ENCODE measurements at regions of chr4 and their contacts with region 1.

Region 1: DNA sequence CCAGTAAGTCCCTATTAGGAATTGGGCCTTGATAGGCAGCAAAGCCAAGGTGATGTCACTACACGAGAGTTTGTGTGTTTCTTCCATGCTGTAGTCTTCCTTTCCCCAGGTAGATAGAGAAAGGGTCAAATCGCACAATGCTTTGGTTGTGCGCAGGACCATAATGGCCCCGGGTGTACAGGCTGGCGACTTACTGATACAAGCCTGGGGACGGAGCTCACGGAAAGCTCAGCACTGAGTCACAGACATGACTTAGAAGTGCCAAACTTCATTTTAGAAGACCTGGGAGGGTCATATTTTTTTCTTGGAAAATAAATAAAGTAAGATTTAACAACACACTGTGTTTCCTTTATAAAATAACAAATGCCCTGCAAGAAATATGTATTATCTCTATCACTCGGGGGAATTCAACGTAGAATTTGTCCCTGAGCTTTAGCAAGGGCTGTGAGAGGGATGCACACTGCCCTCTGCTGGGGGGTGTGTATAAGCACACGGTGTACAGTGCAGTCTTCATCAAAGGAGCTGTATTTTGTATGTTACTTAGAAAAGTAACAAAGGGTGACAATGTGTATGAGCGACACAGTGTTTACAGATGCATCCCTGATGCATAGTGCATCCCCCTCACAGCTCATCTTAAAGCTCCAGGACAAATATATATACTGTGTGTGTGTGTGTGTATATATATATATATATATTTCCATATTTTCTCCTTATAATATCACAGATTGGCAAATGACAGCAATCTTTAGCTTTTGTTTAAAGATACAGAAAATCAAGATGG is 254.5 kb upstream of the VEGFC start:
- DNase-seq: peak; percentile 76
- H3K4me3 ChIP-seq: no peak overlapping the region
- H3K27ac ChIP-seq: no peak overlapping the region
- H3K4me1 ChIP-seq: peaks cover 3% of the 10 kb centered on the region
- H3K27me3 ChIP-seq: no peaks in the 10 kb centered on the region
- CTCF ChIP-seq: peak; percentile 77 to 90
- POLR2A ChIP-seq: no peak

Region 2: DNA sequence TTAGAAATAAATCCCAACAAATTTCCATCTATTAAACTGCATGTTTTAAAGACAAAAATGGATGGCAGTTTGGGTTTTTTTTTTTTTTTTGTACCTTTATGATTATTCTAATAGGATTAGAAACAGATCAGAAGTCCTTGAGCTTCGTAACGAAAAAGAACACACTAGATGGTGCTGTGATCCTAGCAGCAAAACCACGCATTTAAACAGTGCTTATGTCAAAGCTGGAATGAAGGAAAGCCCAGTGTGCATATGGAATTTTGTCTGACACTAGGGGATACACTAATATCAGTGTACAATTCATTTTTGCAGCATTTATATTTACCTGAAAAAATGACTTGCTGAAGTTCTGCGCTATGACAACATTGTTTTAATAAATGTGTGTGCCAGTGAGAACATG is 483.7 kb before region 1 on chr4:
- CTCF ChIA-PET with region 1: interaction called, 35 read pairs
- POLR2A ChIA-PET with region 1: no interaction called
- dilution Hi-C with region 1: no loop called
- intact Hi-C with region 1: loop called (anchors 5 kb)
- DNase-seq: peak; percentile 11
- H3K4me3 ChIP-seq: no peak overlapping the region
- H3K27ac ChIP-seq: no peak overlapping the region
- H3K4me1 ChIP-seq: peaks cover 3% of the 10 kb centered on the region
- H3K27me3 ChIP-seq: peaks cover 3 to 4% of the 10 kb centered on the region in 2 experiments
- CTCF ChIP-seq: no peak
- POLR2A ChIP-seq: no peak

Region 3: GRCh38 chr4:176729489-176729888 is 317.8 kb before region 1 on chr4:
- CTCF ChIA-PET with region 1: interaction called, 15 read pairs
- POLR2A ChIA-PET with region 1: no interaction called
- dilution Hi-C with region 1: no loop called
- intact Hi-C with region 1: no loop called
- DNase-seq: no peak
- H3K4me3 ChIP-seq: no peak overlapping the region
- H3K27ac ChIP-seq: no peak overlapping the region
- H3K4me1 ChIP-seq: no peaks in the 10 kb centered on the region
- H3K27me3 ChIP-seq: no peaks in the 10 kb centered on the region
- CTCF ChIP-seq: no peak
- POLR2A ChIP-seq: no peak

Region 4: DNA sequence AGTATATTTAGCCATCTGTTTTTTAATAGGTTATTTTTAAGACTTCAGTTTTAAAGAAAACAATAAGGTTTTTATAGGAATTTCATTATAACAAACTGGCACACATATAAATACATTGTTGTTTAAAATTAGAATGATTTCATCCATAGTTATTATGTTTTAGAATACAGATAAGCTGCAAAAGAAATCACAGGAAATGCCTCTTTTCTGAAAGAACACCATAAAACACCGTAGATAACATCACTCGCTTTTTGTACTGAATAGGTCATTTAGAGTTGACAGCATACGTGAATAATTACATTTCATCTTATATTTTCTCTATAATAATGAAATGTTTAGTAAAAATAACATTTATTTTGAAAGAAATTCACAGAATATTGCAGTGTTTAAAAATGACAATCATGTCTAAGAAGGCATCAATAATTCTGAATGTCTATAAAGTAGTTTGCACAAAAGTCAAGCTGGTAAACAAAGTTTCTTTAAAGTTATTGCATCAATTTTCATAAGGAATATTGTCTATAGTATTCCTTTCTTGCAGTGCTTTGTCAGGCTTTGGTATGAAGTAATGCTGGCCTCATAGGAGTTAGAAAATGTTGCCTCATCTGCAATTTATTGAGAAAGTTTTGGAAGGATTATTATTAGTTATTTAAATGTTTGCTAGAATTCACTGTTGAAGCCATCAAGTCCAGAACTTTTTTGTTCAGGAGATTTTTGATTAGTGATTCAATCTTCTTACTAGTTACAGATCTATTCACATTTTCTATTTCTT is 236.6 kb before region 1 on chr4:
- CTCF ChIA-PET with region 1: interaction called, 11 read pairs
- POLR2A ChIA-PET with region 1: no interaction called
- dilution Hi-C with region 1: no loop called
- intact Hi-C with region 1: no loop called
- DNase-seq: peak; percentile 73
- H3K4me3 ChIP-seq: no peak overlapping the region
- H3K27ac ChIP-seq: peak overlapping the region; percentile 44
- H3K4me1 ChIP-seq: peaks cover 21% of the 10 kb centered on the region
- H3K27me3 ChIP-seq: no peaks in the 10 kb centered on the region
- CTCF ChIP-seq: no peak
- POLR2A ChIP-seq: no peak

Region 5: GRCh38 chr4:176897226-176897625 is 150.0 kb before region 1 on chr4:
- CTCF ChIA-PET with region 1: interaction called, 13 read pairs
- POLR2A ChIA-PET with region 1: no interaction called
- dilution Hi-C with region 1: no loop called
- intact Hi-C with region 1: no loop called
- DNase-seq: no peak
- H3K4me3 ChIP-seq: no peak overlapping the region
- H3K27ac ChIP-seq: no peak overlapping the region
- H3K4me1 ChIP-seq: peaks cover 4% of the 10 kb centered on the region
- H3K27me3 ChIP-seq: no peaks in the 10 kb centered on the region
- CTCF ChIP-seq: no peak
- POLR2A ChIP-seq: no peak

Region 6: GRCh38 chr4:176988226-176988625 is 59.0 kb before region 1 on chr4:
- CTCF ChIA-PET with region 1: interaction called, 11 read pairs
- POLR2A ChIA-PET with region 1: no interaction called
- dilution Hi-C with region 1: no loop called
- intact Hi-C with region 1: no loop called
- DNase-seq: peak; percentile 92
- H3K4me3 ChIP-seq: no peak overlapping the region
- H3K27ac ChIP-seq: peak overlapping the region; percentile 55
- H3K4me1 ChIP-seq: peaks cover 5% of the 10 kb centered on the region
- H3K27me3 ChIP-seq: no peaks in the 10 kb centered on the region
- CTCF ChIP-seq: no peak
- POLR2A ChIP-seq: no peak

Region 7: GRCh38 chr4:177177541-177178081 is 130.4 kb after region 1 on chr4:
- CTCF ChIA-PET with region 1: no interaction called
- POLR2A ChIA-PET with region 1: no interaction called
- dilution Hi-C with region 1: no loop called
- intact Hi-C with region 1: no loop called
- DNase-seq: no peak
- H3K4me3 ChIP-seq: no peak overlapping the region
- H3K27ac ChIP-seq: no peak overlapping the region
- H3K4me1 ChIP-seq: no peaks in the 10 kb centered on the region
- H3K27me3 ChIP-seq: peaks cover 0 to 2% of the 10 kb centered on the region in 2 experiments
- CTCF ChIP-seq: no peak
- POLR2A ChIP-seq: no peak

Region 8: GRCh38 chr4:177250056-177250696 is 202.9 kb after region 1 on chr4:
- CTCF ChIA-PET with region 1: no interaction called
- POLR2A ChIA-PET with region 1: no interaction called
- dilution Hi-C with region 1: no loop called
- intact Hi-C with region 1: loop called (anchors 10 kb)
- DNase-seq: peak; percentile 65
- H3K4me3 ChIP-seq: no peak overlapping the region
- H3K27ac ChIP-seq: no peak overlapping the region
- H3K4me1 ChIP-seq: no peaks in the 10 kb centered on the region
- H3K27me3 ChIP-seq: peaks cover 0 to 2% of the 10 kb centered on the region in 2 experiments
- CTCF ChIP-seq: peak; percentile 87 to 94
- POLR2A ChIP-seq: no peak

Region 9: DNA sequence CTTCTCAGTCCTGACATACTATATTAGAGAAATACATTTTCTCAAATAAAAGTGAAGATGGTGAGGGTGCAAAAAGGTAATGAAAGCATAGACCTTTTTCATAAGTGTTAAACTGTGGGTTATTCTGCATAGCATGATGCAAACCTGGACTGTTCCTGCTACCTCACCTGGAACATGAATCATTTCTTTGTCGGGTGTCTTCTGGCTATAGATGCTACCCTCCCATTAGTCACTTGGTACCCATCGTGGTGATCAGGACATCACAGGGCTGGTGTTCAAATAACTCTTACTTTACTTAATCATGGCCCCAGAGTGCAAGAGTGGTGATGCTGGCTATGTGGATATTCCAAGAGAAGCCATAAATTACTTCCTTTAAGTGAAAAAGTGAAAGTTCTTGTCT is 659.7 kb after region 1 on chr4:
- CTCF ChIA-PET with region 1: no interaction called
- POLR2A ChIA-PET with region 1: no interaction called
- dilution Hi-C with region 1: no loop called
- intact Hi-C with region 1: no loop called
- DNase-seq: no peak
- H3K4me3 ChIP-seq: no peak overlapping the region
- H3K27ac ChIP-seq: no peak overlapping the region
- H3K4me1 ChIP-seq: no peaks in the 10 kb centered on the region
- H3K27me3 ChIP-seq: no peaks in the 10 kb centered on the region
- CTCF ChIP-seq: no peak
- POLR2A ChIP-seq: no peak